HepG2 (cell line): ENCODE measurements at regions of chrX and their contacts with region 1.

Region 1: GRCh38 chrX:47144626-47145394 is at the starts of genes NDUFB11 and RBM10:
- DNase-seq: peak; percentile 89
- ATAC-seq: peak; percentile 97
- H3K4me3 ChIP-seq: peak within 1 kb of the TSS; percentile 66 to 83 (median 76)
- H3K27ac ChIP-seq: peak within 1 kb of the TSS; percentile 98
- H3K4me1 ChIP-seq: peaks cover 20% of the 10 kb centered on the region
- H3K27me3 ChIP-seq: no peaks in the 10 kb centered on the region
- CTCF ChIP-seq: peak; percentile 63
- EP300 ChIP-seq: no peak
- POLR2A ChIP-seq: peak; percentile 63 to 88
- RAD21 ChIP-seq: no peak
- total RNA-seq, gene NDUFB11: 94.8 and 100 TPM in 2 replicates
- total RNA-seq, gene RBM10: 41.6 and 43.1 TPM in 2 replicates

Region 2: DNA sequence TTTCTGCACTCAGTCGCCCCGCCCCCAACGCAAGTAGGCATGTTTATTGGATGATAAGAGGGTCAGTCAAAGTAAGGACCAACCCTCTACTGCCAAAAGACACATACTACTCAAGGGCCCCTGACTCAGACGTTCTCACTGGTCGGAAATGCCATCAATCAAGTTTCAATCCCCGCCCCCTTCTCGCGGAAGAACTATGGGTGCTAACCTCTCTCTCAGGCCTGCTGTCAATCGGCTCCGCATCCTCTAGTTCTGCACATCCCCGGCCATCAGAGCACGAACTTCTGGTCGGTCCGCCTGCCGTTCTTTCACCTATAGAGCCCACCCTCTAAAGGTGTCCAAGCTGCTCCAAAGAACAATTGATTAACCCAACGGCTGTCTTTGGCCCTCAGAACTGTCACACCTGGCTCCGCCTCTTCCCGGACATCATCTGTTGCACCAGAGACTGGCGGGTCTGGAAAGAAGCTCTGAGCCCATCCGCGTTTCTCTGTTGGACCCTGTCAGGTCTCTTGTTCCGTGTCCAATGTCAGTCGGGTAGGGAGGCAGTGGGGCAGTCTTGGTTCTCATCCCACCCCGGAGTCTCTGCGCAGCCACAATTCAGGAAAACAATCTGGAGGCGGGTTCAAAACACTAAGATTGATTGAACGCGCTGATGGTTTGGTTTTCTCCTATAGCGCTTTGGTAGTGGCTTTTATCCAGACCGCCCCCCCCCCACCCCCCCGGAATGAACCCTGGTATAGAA is 15.5 kb before region 1 on chrX:
- CTCF ChIA-PET with region 1: no interaction called
- POLR2A ChIA-PET with region 1: interaction called, 35 read pairs
- in situ Hi-C with region 1: no loop called
- intact Hi-C with region 1: no loop called
- DNase-seq: peak; percentile 90
- ATAC-seq: peak; percentile 99
- H3K4me3 ChIP-seq: peak overlapping the region; percentile 58 to 75 (median 65)
- H3K27ac ChIP-seq: peak overlapping the region; percentile 73
- H3K4me1 ChIP-seq: no peaks in the 10 kb centered on the region
- H3K27me3 ChIP-seq: no peaks in the 10 kb centered on the region
- CTCF ChIP-seq: no peak
- EP300 ChIP-seq: no peak
- POLR2A ChIP-seq: peak; percentile 35 to 47; a peak in 3 of 4 replicates
- RAD21 ChIP-seq: no peak

Region 3: DNA sequence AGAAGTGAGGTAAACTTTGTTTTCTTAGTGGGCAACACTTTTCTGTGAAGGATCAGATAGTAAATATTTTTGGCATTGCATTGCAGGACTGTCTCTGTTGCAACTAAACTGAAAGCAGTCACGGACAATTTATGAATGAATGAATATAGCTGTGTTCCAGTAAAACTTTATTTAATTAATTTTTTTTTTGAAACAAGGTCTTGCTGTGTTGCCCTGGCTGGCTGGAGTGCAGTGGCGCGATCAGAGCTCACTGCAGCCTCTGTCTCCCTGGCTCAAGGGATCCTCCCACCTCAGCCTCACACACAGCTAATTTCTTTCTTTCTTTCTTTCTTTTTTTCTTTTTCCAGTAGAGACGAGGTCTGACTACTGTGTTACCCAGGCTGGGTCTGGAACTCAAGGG is 16.0 kb after region 1 on chrX:
- CTCF ChIA-PET with region 1: no interaction called
- POLR2A ChIA-PET with region 1: interaction called, 10 read pairs
- in situ Hi-C with region 1: no loop called
- intact Hi-C with region 1: loop called (anchors 2 kb)
- DNase-seq: no peak
- ATAC-seq: no peak
- H3K4me3 ChIP-seq: no peak overlapping the region
- H3K27ac ChIP-seq: peak overlapping the region; percentile 82
- H3K4me1 ChIP-seq: peaks cover 36% of the 10 kb centered on the region
- H3K27me3 ChIP-seq: no peaks in the 10 kb centered on the region
- CTCF ChIP-seq: no peak
- EP300 ChIP-seq: no peak
- POLR2A ChIP-seq: no peak
- RAD21 ChIP-seq: no peak

Region 4: GRCh38 chrX:47166126-47166525 is 21.3 kb after region 1 on chrX:
- CTCF ChIA-PET with region 1: no interaction called
- POLR2A ChIA-PET with region 1: interaction called, 10 read pairs
- in situ Hi-C with region 1: no loop called
- intact Hi-C with region 1: loop called (anchors 2 kb)
- DNase-seq: no peak
- ATAC-seq: no peak
- H3K4me3 ChIP-seq: no peak overlapping the region
- H3K27ac ChIP-seq: no peak overlapping the region
- H3K4me1 ChIP-seq: peaks cover 31% of the 10 kb centered on the region
- H3K27me3 ChIP-seq: no peaks in the 10 kb centered on the region
- CTCF ChIP-seq: no peak
- EP300 ChIP-seq: no peak
- POLR2A ChIP-seq: no peak
- RAD21 ChIP-seq: no peak